ENCODE measurements at regions of chr7 and their contacts with region 1.

Region 1: GRCh38 chr7:26398756-26399501 is 107.3 kb downstream of the SNX10 start:
- DNase-seq: peak; percentile 91
- ATAC-seq: peak; percentile 92
- H3K4me3 ChIP-seq: peak overlapping the region; percentile 71
- H3K27ac ChIP-seq: peak overlapping the region; percentile 82
- H3K4me1 ChIP-seq: peaks cover 15% of the 10 kb centered on the region; the same call in 1 of the 2 replicates
- H3K27me3 ChIP-seq: peaks cover 0 to 2% of the 10 kb centered on the region in 2 experiments; a peak in 1 of 4 replicates
- CTCF ChIP-seq: no peak
- EP300 ChIP-seq: peak; percentile 63 to 70; a peak in 3 of 4 replicates
- POLR2A ChIP-seq: peak; percentile 94
- RAD21 ChIP-seq: no peak

Region 2: GRCh38 chr7:26423437-26423836 is 24.5 kb after region 1 on chr7:
- CTCF ChIA-PET with region 1: no interaction called
- POLR2A ChIA-PET with region 1: no interaction called
- RAD21 ChIA-PET with region 1: no interaction called
- SMC1A ChIA-PET with region 1: no interaction called
- in situ Hi-C with region 1: no loop called
- intact Hi-C with region 1: no loop called
- DNase-seq: no peak
- ATAC-seq: no peak
- H3K4me3 ChIP-seq: no peak overlapping the region
- H3K27ac ChIP-seq: no peak overlapping the region
- H3K4me1 ChIP-seq: no peaks in the 10 kb centered on the region
- H3K27me3 ChIP-seq: no peaks in the 10 kb centered on the region; a peak in 1 of 4 replicates
- CTCF ChIP-seq: no peak
- EP300 ChIP-seq: no peak
- POLR2A ChIP-seq: no peak
- RAD21 ChIP-seq: no peak

Region 3: GRCh38 chr7:26449175-26450165 is 50.5 kb after region 1 on chr7:
- CTCF ChIA-PET with region 1: no interaction called
- POLR2A ChIA-PET with region 1: no interaction called
- RAD21 ChIA-PET with region 1: no interaction called
- SMC1A ChIA-PET with region 1: no interaction called
- in situ Hi-C with region 1: no loop called
- intact Hi-C with region 1: no loop called
- DNase-seq: no peak
- ATAC-seq: no peak
- H3K4me3 ChIP-seq: no peak overlapping the region
- H3K27ac ChIP-seq: no peak overlapping the region
- H3K4me1 ChIP-seq: no peaks in the 10 kb centered on the region
- H3K27me3 ChIP-seq: no peaks in the 10 kb centered on the region
- CTCF ChIP-seq: no peak
- EP300 ChIP-seq: no peak
- POLR2A ChIP-seq: no peak
- RAD21 ChIP-seq: no peak

Region 4: GRCh38 chr7:26480156-26480555 is 81.2 kb after region 1 on chr7:
- CTCF ChIA-PET with region 1: no interaction called
- POLR2A ChIA-PET with region 1: no interaction called
- RAD21 ChIA-PET with region 1: no interaction called
- SMC1A ChIA-PET with region 1: interaction called, 3 read pairs
- in situ Hi-C with region 1: no loop called
- intact Hi-C with region 1: loop called (anchors 5 kb)
- DNase-seq: no peak
- ATAC-seq: no peak
- H3K4me3 ChIP-seq: no peak overlapping the region
- H3K27ac ChIP-seq: no peak overlapping the region
- H3K4me1 ChIP-seq: no peaks in the 10 kb centered on the region
- H3K27me3 ChIP-seq: peaks cover 4% of the 10 kb centered on the region in 2 experiments; a peak in 3 of 4 replicates
- CTCF ChIP-seq: no peak
- EP300 ChIP-seq: no peak
- POLR2A ChIP-seq: no peak
- RAD21 ChIP-seq: no peak

Region 5: DNA sequence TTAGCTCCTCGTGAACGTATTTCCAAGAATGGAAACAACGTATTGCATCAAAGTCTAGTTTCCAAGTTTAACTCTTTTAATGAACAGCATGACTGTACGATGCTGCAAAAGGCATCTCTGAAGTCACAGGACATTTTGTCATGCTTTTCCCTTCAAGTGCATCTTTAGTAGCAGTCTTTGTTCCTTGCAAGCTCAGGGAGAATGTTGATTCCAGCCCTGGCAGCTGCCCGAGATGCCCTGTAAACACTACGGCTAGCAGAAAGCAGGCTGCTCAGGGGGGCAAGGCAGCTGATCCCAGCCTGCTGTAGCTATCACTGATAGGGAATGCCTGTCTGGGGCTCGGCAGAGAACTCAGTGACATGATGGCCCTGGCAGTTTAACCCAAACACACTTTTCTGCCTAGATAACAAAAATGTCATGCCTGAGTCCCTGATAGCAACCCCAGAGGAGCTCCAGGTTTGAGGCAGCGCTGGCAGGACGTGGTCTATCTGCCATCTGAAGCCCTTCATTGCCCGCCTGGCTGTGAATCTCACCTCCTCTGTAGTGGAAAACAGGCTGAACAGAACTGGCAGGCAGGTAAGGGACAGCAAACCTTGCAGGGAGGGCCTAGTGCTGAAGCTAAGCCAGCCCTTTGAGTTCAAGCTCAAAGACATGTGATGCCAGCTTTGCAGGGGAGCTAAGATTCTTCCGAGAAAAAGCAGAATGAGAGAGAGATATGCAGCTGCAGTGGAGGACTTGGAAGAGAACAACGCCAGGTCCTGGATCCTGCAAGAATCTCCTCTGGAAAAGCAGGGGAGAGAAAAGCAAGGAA is 157.3 kb after region 1 on chr7:
- CTCF ChIA-PET with region 1: no interaction called
- POLR2A ChIA-PET with region 1: no interaction called
- RAD21 ChIA-PET with region 1: no interaction called
- SMC1A ChIA-PET with region 1: no interaction called
- in situ Hi-C with region 1: no loop called
- intact Hi-C with region 1: no loop called
- DNase-seq: no peak
- ATAC-seq: no peak
- H3K4me3 ChIP-seq: no peak overlapping the region
- H3K27ac ChIP-seq: no peak overlapping the region
- H3K4me1 ChIP-seq: no peaks in the 10 kb centered on the region
- H3K27me3 ChIP-seq: peaks cover 0 to 8% of the 10 kb centered on the region in 2 experiments; a peak in 3 of 4 replicates
- CTCF ChIP-seq: no peak
- EP300 ChIP-seq: no peak
- POLR2A ChIP-seq: no peak
- RAD21 ChIP-seq: no peak

Measured in GM12878 (cell line).